K562 (cell line): ENCODE measurements at regions of chr19 and their contacts with region 1.

Region 1: GRCh38 chr19:44212250-44212865 is at the start of gene ZNF227:
- DNase-seq: peak; percentile 75 to 86 (median 80)
- ATAC-seq: peak; percentile 99
- H3K4me3 ChIP-seq: peak within 1 kb of the TSS; percentile 73
- H3K27ac ChIP-seq: peak within 1 kb of the TSS; percentile 74
- H3K4me1 ChIP-seq: no peaks in the 10 kb centered on the region
- H3K27me3 ChIP-seq: no peaks in the 10 kb centered on the region
- CTCF ChIP-seq: no peak
- EP300 ChIP-seq: no peak
- POLR2A ChIP-seq: peak; percentile 76
- RAD21 ChIP-seq: no peak
- polyA plus RNA-seq, gene ZNF227: 3.0 to 6.0 TPM

Region 2: DNA sequence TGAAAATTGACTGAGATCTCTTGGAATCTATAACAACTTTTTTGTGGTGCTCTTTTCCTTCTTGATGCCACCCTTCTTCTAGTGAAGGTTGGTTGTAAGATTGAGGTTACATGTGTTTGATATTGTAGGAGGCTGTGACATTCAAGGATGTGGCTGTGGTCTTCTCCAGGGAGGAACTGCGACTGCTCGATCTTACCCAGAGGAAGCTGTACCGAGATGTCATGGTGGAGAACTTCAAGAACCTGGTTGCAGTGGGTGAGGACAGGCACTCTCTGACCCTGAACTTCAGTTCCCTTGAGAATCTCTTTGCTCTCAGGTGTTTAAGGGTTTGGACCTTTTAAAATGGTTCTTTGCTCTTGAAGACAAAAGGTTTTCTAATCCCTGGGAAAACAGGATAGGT is 16.0 kb after region 1 on chr19:
- CTCF ChIA-PET with region 1: no interaction called
- POLR2A ChIA-PET with region 1: no interaction called
- in situ Hi-C with region 1: no loop called
- intact Hi-C with region 1: no loop called
- DNase-seq: no peak
- ATAC-seq: no peak
- H3K4me3 ChIP-seq: no peak overlapping the region
- H3K27ac ChIP-seq: no peak overlapping the region
- H3K4me1 ChIP-seq: no peaks in the 10 kb centered on the region
- H3K27me3 ChIP-seq: no peaks in the 10 kb centered on the region
- CTCF ChIP-seq: no peak
- EP300 ChIP-seq: no peak
- POLR2A ChIP-seq: no peak
- RAD21 ChIP-seq: no peak

Region 3: DNA sequence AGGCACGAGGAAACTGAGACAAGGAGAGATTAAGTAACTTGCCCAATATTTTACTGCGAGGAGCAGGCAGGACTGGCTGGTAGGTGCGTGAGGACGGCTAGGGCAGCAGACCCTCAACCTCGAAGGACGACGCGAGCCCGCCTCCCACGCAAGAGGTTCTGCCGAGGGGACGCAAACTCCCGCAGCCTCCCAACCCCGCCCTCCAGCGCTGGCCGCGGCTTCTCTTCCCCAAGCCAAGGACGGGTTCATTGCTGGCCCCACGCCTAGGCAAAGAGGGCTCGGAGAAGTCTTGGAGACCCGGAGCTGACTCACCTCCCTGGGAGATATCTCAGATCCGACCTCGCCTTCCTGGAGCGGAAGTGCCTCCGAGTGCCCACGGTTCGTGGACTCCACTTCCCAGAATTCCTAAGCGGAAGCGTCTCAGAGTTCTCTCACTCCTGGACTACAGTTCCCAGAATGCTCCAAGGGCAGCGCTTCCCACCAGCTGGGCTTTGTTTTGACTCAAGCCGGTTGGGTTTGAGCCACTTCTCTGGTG is 92.4 kb after region 1 on chr19 and contains the start of gene ZNF235:
- CTCF ChIA-PET with region 1: no interaction called
- POLR2A ChIA-PET with region 1: interaction called, 3 read pairs
- in situ Hi-C with region 1: no loop called
- intact Hi-C with region 1: loop called (anchors 10 kb)
- DNase-seq: peak; percentile 84 to 95 (median 87)
- ATAC-seq: peak; percentile 99
- H3K4me3 ChIP-seq: peak within 1 kb of the TSS; percentile 52
- H3K27ac ChIP-seq: peak within 1 kb of the TSS; percentile 78
- H3K4me1 ChIP-seq: peaks cover 4% of the 10 kb centered on the region in 2 experiments; a peak in 2 of 5 replicates
- H3K27me3 ChIP-seq: no peaks in the 10 kb centered on the region; a peak in 1 of 5 replicates
- CTCF ChIP-seq: no peak
- EP300 ChIP-seq: no peak
- POLR2A ChIP-seq: peak; percentile 71
- RAD21 ChIP-seq: peak in 1 of 2 experiments; percentile 26; a peak in 1 of 4 replicates
- polyA plus RNA-seq, gene ZNF235: 0.99 to 1.3 TPM

Region 4: DNA sequence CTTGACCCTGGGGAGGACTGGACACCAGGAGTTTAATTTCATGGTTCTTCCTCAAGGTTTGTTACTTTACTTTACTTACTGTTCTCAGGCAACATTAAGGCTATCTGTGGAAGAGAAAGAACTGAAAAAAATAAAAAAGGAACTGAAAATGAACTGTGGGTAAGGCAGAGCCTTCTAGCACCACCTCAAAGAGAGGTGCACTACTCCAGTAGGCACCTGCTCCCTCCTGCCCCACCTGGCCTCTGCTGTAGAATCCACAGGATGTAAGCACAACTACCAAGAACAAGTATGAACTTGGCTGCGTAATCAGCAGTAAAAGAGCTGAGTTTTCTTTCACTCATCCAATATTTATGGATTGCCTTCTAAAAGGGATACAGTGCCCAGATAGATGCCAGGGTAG is 131.9 kb after region 1 on chr19:
- CTCF ChIA-PET with region 1: no interaction called
- POLR2A ChIA-PET with region 1: no interaction called
- in situ Hi-C with region 1: no loop called
- intact Hi-C with region 1: no loop called
- DNase-seq: no peak
- ATAC-seq: no peak
- H3K4me3 ChIP-seq: no peak overlapping the region
- H3K27ac ChIP-seq: no peak overlapping the region
- H3K4me1 ChIP-seq: no peaks in the 10 kb centered on the region
- H3K27me3 ChIP-seq: no peaks in the 10 kb centered on the region
- CTCF ChIP-seq: no peak
- EP300 ChIP-seq: no peak
- POLR2A ChIP-seq: no peak
- RAD21 ChIP-seq: no peak

Region 5: GRCh38 chr19:44371815-44372480 is 159.6 kb after region 1 on chr19:
- CTCF ChIA-PET with region 1: no interaction called
- POLR2A ChIA-PET with region 1: no interaction called
- in situ Hi-C with region 1: no loop called
- intact Hi-C with region 1: no loop called
- DNase-seq: peak in 1 of 4 experiments; percentile 8
- ATAC-seq: no peak
- H3K4me3 ChIP-seq: no peak overlapping the region
- H3K27ac ChIP-seq: no peak overlapping the region
- H3K4me1 ChIP-seq: no peaks in the 10 kb centered on the region
- H3K27me3 ChIP-seq: no peaks in the 10 kb centered on the region
- CTCF ChIP-seq: no peak
- EP300 ChIP-seq: no peak
- POLR2A ChIP-seq: no peak
- RAD21 ChIP-seq: no peak